ENCODE measurements at regions of chr16 and their contacts with region 1.

Region 1: GRCh38 chr16:27109666-27110523 is 43.2 kb downstream of the C16orf82 start:
- DNase-seq: peak; percentile 18
- H3K4me3 ChIP-seq: peak overlapping the region; percentile 59
- H3K27ac ChIP-seq: no peak overlapping the region
- H3K27me3 ChIP-seq: no peaks in the 10 kb centered on the region
- CTCF ChIP-seq: peak; percentile 78

Region 2: DNA sequence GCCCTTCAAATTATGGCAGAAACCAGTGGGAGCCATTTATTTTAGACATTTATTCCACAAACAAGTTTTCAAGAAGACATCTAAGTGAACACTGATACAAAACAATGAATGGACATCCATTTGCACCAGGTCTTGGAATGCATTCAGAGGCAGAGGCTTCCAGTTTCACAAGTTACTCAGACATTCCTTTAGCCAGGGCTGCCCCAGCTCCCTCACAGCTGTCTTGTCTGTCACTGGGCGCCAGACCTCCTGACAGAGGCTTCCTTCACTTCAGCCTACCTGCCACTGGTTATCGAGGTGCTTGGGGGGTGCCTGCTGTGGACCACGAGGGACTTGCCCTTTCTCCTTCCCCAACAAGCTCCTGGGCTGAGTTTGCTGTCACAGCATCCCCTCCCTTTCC is 1873.9 kb before region 1 on chr16:
- CTCF ChIA-PET with region 1: interaction called, 11 read pairs
- POLR2A ChIA-PET with region 1: interaction called, 7 read pairs
- DNase-seq: no peak
- H3K4me3 ChIP-seq: no peak overlapping the region
- H3K27ac ChIP-seq: no peak overlapping the region
- H3K27me3 ChIP-seq: peaks cover 2% of the 10 kb centered on the region
- CTCF ChIP-seq: no peak

Region 3: GRCh38 chr16:25838724-25839186 is 1271.1 kb before region 1 on chr16:
- CTCF ChIA-PET with region 1: interaction called, 76 read pairs
- POLR2A ChIA-PET with region 1: no interaction called
- DNase-seq: peak; percentile 13
- H3K4me3 ChIP-seq: no peak overlapping the region
- H3K27ac ChIP-seq: no peak overlapping the region
- H3K27me3 ChIP-seq: no peaks in the 10 kb centered on the region
- CTCF ChIP-seq: peak; percentile 69

Region 4: GRCh38 chr16:26386096-26386495 is 723.8 kb before region 1 on chr16:
- CTCF ChIA-PET with region 1: interaction called, 14 read pairs
- POLR2A ChIA-PET with region 1: no interaction called
- DNase-seq: no peak
- H3K4me3 ChIP-seq: no peak overlapping the region
- H3K27ac ChIP-seq: no peak overlapping the region
- H3K27me3 ChIP-seq: no peaks in the 10 kb centered on the region
- CTCF ChIP-seq: no peak

Region 5: DNA sequence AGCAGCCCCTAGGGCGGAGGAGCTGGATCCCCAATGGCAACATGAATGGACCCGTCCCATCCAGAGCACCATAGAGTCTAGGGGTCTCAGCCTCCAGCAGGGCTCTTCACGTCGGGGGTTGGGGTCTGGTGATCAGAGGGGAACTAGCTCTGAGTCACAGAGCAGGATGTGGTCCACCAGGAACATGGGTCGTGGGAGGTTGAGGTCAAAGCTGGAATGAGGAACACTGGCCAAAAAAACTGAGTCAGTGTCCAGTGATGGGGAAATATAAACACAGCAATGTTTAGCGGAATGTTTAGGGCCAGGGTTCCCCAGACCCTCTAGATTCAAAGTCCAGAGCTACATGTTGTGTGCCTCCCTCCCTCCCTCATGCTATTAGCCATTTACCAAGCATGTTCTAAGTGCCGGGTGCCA is 122.3 kb before region 1 on chr16:
- CTCF ChIA-PET with region 1: interaction called, 17 read pairs
- POLR2A ChIA-PET with region 1: no interaction called
- DNase-seq: peak; percentile 88
- H3K4me3 ChIP-seq: no peak overlapping the region
- H3K27ac ChIP-seq: peak overlapping the region; percentile 98
- H3K27me3 ChIP-seq: no peaks in the 10 kb centered on the region
- CTCF ChIP-seq: no peak

Region 6: GRCh38 chr16:27088216-27088615 is 21.7 kb before region 1 on chr16:
- CTCF ChIA-PET with region 1: no interaction called
- POLR2A ChIA-PET with region 1: no interaction called
- DNase-seq: no peak
- H3K4me3 ChIP-seq: no peak overlapping the region
- H3K27ac ChIP-seq: no peak overlapping the region
- H3K27me3 ChIP-seq: peaks cover 7% of the 10 kb centered on the region
- CTCF ChIP-seq: no peak

Region 7: GRCh38 chr16:27179500-27180072 is 69.7 kb after region 1 on chr16:
- CTCF ChIA-PET with region 1: interaction called, 12 read pairs
- POLR2A ChIA-PET with region 1: no interaction called
- DNase-seq: no peak
- H3K4me3 ChIP-seq: no peak overlapping the region
- H3K27ac ChIP-seq: no peak overlapping the region
- H3K27me3 ChIP-seq: no peaks in the 10 kb centered on the region
- CTCF ChIP-seq: peak; percentile 79

Measured in AG04450 (cell line).